ENCODE measurements at regions of chr17 and their contacts with region 1.

Region 1: DNA sequence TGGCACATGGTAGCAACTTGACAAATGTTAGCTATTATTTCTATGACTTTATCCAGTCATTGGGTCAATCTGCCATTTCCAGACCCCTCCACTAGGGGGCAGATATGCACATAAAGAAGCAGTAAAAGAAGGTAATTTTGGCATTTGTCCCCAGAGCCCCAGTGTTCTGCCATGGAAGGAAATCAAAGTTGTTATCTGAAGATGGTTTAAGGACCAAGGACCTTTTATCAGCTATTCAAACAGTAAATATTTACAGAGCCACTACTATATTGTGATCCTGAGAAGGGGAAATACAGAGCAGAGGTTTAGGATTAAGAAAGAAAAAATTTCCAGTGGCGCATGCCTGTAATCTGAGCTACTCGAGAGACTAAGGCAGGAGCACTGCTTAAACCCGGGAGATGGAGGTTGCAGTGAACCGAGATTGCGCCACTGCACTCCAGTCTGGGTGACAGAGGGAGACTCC is 20.0 kb downstream of the TRAF4 start:
- DNase-seq: peak in 3 of 5 donors; percentile 61 to 68 (median 64)
- ATAC-seq: peak in 2 of 4 donors; percentile 44 to 47
- H3K4me3 ChIP-seq: no peak overlapping the region
- H3K27ac ChIP-seq: no peak overlapping the region
- H3K4me1 ChIP-seq: peaks cover 0 to 23% (median 12%) of the 10 kb centered on the region in 12 donors
- H3K27me3 ChIP-seq: no peaks in the 10 kb centered on the region
- CTCF ChIP-seq: peak; percentile 85 to 95 (median 94)
- POLR2A ChIP-seq: no peak

Region 2: DNA sequence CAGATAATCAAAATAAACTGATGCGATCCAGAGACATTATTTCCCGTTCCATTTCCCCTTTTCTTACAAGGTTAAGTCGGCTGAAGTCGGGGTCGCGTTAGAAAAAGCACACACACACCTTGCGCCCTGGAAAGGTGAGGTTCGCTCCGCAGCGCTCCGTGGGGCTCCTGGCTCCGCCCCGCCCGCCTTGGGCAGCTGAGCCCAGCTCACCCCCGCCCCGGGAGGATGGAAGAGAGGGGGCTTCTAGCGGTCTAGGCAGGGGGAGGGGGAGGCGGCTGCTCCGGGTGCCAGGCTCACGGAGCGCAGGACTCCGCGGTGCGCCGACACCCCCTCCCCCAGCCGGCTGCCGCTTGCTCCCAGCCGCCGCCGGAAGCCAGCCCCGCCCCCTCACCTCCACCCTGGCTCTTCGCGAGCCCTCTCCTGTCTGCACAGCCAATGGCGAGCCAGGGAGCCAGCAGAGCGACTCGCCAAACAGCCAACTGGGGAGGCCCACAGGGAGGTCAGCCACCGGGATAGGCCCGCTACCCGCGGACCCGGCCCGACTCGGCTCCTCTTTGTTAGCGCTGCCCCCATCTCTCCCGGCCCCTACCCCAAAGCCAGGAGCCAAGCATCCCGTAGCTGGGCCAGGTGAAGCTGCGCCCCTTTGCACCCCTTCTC is 48.4 kb after region 1 on chr17:
- intact Hi-C with region 1: loop called in 4 of 10 experiments (anchors 2 to 10 kb)
- DNase-seq: peak; percentile 98 to 99 (median 99)
- ATAC-seq: peak; percentile 100
- H3K4me3 ChIP-seq: peak overlapping the region; percentile 63 to 99 (median 90)
- H3K27ac ChIP-seq: peak overlapping the region; percentile 42 to 92 (median 87)
- H3K4me1 ChIP-seq: peaks cover 0 to 42% (median 22%) of the 10 kb centered on the region in 12 donors
- H3K27me3 ChIP-seq: no peaks in the 10 kb centered on the region
- CTCF ChIP-seq: no peak
- POLR2A ChIP-seq: peak in 1 of 2 donors; percentile 47

Region 3: GRCh38 chr17:28854457-28855350 is 90.9 kb after region 1 on chr17 and contains the start of gene ERAL1:
- intact Hi-C with region 1: loop called in 2 of 10 experiments (anchors 10 kb)
- DNase-seq: peak; percentile 85 to 89 (median 88)
- ATAC-seq: peak; percentile 98 to 100 (median 100)
- H3K4me3 ChIP-seq: peak within 1 kb of the TSS; percentile 69 to 93 (median 76)
- H3K27ac ChIP-seq: peak within 1 kb of the TSS; percentile 5 to 88 (median 75)
- H3K4me1 ChIP-seq: peaks cover 0 to 17% (median 9%) of the 10 kb centered on the region in 12 donors
- H3K27me3 ChIP-seq: no peaks in the 10 kb centered on the region
- CTCF ChIP-seq: peak in 4 of 12 donors; percentile 5 to 32 (median 14)
- POLR2A ChIP-seq: peak in 1 of 2 donors; percentile 55
- total RNA-seq, gene ERAL1: 28.0 to 78.2 (median 41.1) TPM

Region 4: DNA sequence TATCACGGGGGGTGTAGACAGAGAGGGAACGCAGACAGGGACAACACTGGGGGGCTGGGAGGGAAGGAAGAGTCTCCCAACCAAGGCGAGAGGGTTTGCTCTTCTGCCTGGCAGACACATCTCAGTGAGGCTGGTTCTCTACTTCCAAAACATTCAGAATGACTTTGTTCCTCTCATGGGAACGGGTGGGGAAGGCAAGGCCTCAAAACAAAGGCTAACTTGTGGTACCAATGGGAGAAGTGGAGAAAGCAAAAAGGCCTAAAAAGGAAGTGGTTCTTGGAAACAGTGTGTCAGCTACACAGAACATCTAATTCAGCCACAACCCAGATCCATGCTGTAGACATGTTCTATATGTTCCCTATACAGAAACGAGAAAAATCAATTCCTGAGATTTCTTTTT is 126.2 kb after region 1 on chr17:
- intact Hi-C with region 1: loop called in 5 of 10 experiments (anchors 5 kb)
- DNase-seq: peak in 1 of 5 donors; percentile 3
- ATAC-seq: peak in 1 of 4 donors; percentile 22
- H3K4me3 ChIP-seq: no peak overlapping the region
- H3K27ac ChIP-seq: peak overlapping the region in 2 of 12 donors; percentile 32 to 42
- H3K4me1 ChIP-seq: peaks cover 3 to 48% (median 17%) of the 10 kb centered on the region in 12 donors
- H3K27me3 ChIP-seq: no peaks in the 10 kb centered on the region
- CTCF ChIP-seq: no peak
- POLR2A ChIP-seq: no peak

Region 5: DNA sequence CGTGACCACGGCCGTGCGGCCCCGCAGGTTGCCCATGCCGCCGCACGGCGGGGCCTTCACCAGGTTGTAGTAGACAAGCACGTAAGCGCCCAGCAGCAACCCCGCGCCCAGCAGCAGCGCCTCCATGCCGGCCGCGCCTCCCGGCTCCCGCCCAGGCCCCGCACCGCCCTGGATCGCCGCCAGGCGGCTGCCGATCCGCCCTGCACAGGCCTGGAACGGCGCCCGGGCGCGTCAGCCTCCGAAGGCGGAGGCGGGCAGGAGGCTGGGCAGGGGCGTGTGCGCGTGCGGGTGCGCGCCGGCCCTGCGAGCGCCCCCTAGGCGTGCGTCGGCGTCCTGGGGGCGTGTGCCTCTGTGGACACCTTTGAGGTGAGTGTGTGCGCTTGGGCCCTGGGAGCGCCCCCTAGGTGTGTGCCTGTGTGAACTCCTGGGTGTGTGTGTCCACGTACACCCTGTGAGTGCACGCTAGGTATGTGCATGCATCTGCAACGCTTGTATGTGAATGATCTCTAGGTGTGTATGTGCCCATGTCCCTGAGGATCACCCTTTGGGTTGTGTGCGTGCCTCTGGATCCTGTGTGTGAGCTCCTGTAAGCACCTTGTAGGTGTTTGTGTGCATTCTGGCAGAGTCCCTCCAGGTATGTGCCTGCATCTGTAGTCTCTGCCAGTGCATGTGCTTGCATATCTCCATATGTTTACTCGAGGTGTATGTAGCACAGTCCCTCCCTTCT is 139.1 kb after region 1 on chr17 and contains the start of gene DHRS13:
- intact Hi-C with region 1: loop called in 6 of 10 experiments (anchors 5 kb)
- DNase-seq: peak; percentile 89 to 96 (median 91)
- ATAC-seq: peak; percentile 65 to 92 (median 90)
- H3K4me3 ChIP-seq: peak within 1 kb of the TSS; percentile 51 to 96 (median 76)
- H3K27ac ChIP-seq: peak within 1 kb of the TSS in 11 of 12 donors; percentile 58 to 86 (median 78)
- H3K4me1 ChIP-seq: peaks cover 0 to 40% (median 24%) of the 10 kb centered on the region in 12 donors
- H3K27me3 ChIP-seq: no peaks in the 10 kb centered on the region
- CTCF ChIP-seq: peak; percentile 67 to 93 (median 87)
- POLR2A ChIP-seq: peak in 1 of 2 donors; percentile 38
- total RNA-seq, gene DHRS13: 2.2 to 4.8 (median 2.6) TPM

Region 6: DNA sequence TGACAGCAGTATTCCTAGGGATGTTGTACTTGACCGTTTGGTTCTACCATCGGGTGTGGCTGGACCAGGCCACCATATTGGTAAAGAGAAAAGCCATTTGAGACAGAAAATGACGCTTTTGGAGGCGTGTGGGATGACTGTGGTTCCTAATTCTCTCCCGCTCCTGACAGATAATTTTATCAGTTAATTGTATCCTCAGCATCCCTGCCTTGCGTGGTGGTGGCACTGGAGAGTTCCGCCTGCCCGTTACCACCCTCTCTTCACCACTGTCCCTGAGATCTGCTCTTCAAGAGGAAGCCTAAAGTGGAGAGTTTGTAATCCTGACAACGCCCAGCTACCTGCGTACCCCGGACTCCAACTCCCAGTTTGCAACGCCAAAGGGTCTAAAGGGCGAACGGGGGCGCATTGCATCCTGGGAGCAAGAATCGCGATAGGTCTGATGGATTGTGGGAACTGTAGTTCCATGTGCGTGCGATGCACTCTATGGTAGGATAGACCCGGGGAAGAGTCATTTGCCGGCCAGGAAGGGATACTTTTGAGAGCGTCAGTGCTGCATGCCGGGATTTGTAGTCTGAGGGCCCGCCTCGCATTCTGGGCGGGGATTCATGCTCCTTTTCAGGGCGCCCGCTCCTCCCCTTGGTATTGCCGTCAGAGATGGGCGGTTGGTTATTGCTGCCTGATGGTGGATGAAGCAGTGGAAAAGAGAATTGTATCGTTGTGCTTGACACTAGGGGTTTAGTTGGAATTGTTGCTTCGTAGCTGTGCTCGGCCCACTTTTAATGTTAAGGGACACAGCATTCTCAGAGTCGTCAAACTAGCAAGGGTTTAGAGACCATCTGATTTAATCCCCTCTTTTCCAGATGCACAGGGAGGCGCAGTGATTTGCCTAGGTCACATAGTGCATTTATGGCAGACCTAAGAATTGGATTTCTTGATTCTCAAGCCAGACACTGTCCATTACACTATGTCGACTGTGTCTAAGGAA is 188.4 kb after region 1 on chr17:
- intact Hi-C with region 1: loop called in 2 of 10 experiments (anchors 5 to 10 kb)
- DNase-seq: peak; percentile 94 to 98 (median 98)
- ATAC-seq: peak; percentile 82 to 91 (median 88)
- H3K4me3 ChIP-seq: peak overlapping the region; percentile 27 to 99 (median 74)
- H3K27ac ChIP-seq: peak overlapping the region; percentile 90 to 100 (median 99)
- H3K4me1 ChIP-seq: peaks cover 0 to 40% (median 19%) of the 10 kb centered on the region in 12 donors
- H3K27me3 ChIP-seq: no peaks in the 10 kb centered on the region
- CTCF ChIP-seq: peak in 1 of 12 donors; percentile 15
- POLR2A ChIP-seq: peak in 1 of 2 donors; percentile 46